ENCODE measurements at regions of chr22 and their contacts with region 1.

Region 1: DNA sequence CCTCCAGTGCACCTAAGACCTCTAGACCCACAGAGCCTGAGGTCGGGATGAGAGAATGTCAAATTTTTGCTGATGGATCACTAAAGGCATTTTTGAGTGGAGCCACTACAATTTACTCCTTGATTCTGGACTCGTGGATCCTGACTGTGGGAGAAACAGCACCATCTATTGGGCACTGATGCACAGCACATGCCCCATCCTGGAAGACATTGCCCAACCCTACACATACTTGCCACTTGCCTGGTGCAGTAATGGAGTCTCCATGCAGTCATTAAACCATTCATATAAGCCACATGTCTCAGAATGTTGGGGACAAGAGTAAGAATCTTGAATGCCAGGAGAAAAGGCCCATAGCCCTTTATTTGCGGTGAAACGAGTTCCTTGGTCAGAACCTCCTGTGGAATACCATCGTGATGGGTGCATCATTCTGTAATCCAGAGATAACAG is 103.9 kb downstream of the GGTLC2 start:
- DNase-seq: no peak
- ATAC-seq: peak; percentile 80

Region 2: DNA sequence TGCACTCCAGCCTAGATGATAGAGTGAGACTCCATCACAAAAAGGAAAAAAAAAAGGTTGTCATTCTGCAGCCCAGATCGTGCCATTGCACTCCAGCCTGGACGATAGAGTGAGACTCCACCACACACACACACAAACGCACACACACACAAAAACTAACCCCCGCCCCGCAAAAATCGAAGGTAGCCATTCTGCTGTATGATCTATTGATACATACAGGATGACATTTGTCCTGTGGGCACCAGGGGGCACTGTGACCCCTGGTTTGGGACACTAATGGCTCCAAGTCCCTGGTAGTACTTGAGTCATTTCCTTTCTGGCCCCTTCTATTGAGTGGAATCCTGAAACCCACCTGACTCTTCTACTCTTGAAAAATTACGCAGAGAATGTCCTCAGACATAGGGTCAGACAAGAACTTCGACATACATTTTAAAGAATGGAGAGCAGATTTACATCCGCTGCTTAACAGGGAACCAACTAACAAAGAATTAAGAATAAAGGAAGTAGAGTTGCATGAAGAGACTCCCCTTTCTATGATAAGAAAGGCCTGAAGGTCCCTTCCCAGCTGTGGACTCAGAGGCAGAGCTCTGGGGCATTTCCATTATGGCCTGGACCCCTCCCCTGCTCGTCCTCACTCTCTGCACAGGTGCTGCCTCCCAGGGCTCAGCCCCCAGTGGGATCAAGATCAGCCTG is 154.2 kb before region 1 on chr22:
- intact Hi-C with region 1: loop called (anchors 5 kb)
- DNase-seq: peak; percentile 57
- ATAC-seq: no peak

Measured in Right ventricle myocardium superior (tissue), 1 donor.